ENCODE measurements at regions of chr2 and their contacts with region 1.

Region 1: GRCh38 chr2:224650815-224651439 is 65.2 kb downstream of the CCDC195 start:
- DNase-seq: peak; percentile 57
- ATAC-seq: peak; percentile 90
- H3K4me3 ChIP-seq: no peak overlapping the region
- H3K27ac ChIP-seq: no peak overlapping the region
- H3K4me1 ChIP-seq: no peaks in the 10 kb centered on the region
- H3K27me3 ChIP-seq: no peaks in the 10 kb centered on the region
- CTCF ChIP-seq: peak; percentile 82
- EP300 ChIP-seq: no peak
- POLR2A ChIP-seq: no peak
- RAD21 ChIP-seq: peak; percentile 66

Region 2: GRCh38 chr2:224357098-224357901 is 293.6 kb before region 1 on chr2:
- CTCF ChIA-PET with region 1: interaction called, 41 read pairs
- POLR2A ChIA-PET with region 1: no interaction called
- in situ Hi-C with region 1: loop called (anchors 5 kb)
- intact Hi-C with region 1: loop called (anchors 1 kb)
- DNase-seq: peak; percentile 58
- ATAC-seq: peak; percentile 86
- H3K4me3 ChIP-seq: no peak overlapping the region
- H3K27ac ChIP-seq: no peak overlapping the region
- H3K4me1 ChIP-seq: no peaks in the 10 kb centered on the region
- H3K27me3 ChIP-seq: peaks cover 0 to 10% of the 10 kb centered on the region in 2 experiments; a peak in 2 of 5 replicates
- CTCF ChIP-seq: peak; percentile 90
- EP300 ChIP-seq: no peak
- POLR2A ChIP-seq: no peak
- RAD21 ChIP-seq: peak; percentile 65

Region 3: GRCh38 chr2:224449212-224450147 is 201.4 kb before region 1 on chr2:
- CTCF ChIA-PET with region 1: no interaction called
- POLR2A ChIA-PET with region 1: no interaction called
- in situ Hi-C with region 1: no loop called
- intact Hi-C with region 1: loop called (anchors 1 kb)
- DNase-seq: peak; percentile 44
- ATAC-seq: peak; percentile 83
- H3K4me3 ChIP-seq: no peak overlapping the region
- H3K27ac ChIP-seq: no peak overlapping the region
- H3K4me1 ChIP-seq: no peaks in the 10 kb centered on the region
- H3K27me3 ChIP-seq: no peaks in the 10 kb centered on the region
- CTCF ChIP-seq: peak; percentile 59
- EP300 ChIP-seq: no peak
- POLR2A ChIP-seq: no peak
- RAD21 ChIP-seq: peak; percentile 39; the same call in 1 of the 2 replicates

Region 4: GRCh38 chr2:224479826-224480225 is 171.1 kb before region 1 on chr2:
- CTCF ChIA-PET with region 1: no interaction called
- POLR2A ChIA-PET with region 1: no interaction called
- in situ Hi-C with region 1: no loop called
- intact Hi-C with region 1: loop called (anchors 10 kb)
- DNase-seq: no peak
- ATAC-seq: no peak
- H3K4me3 ChIP-seq: no peak overlapping the region
- H3K27ac ChIP-seq: no peak overlapping the region
- H3K4me1 ChIP-seq: peaks cover 2% of the 10 kb centered on the region
- H3K27me3 ChIP-seq: no peaks in the 10 kb centered on the region
- CTCF ChIP-seq: no peak
- EP300 ChIP-seq: no peak
- POLR2A ChIP-seq: no peak
- RAD21 ChIP-seq: no peak

Region 5: GRCh38 chr2:224591220-224591619 is 59.7 kb before region 1 on chr2:
- CTCF ChIA-PET with region 1: no interaction called
- POLR2A ChIA-PET with region 1: no interaction called
- in situ Hi-C with region 1: no loop called
- intact Hi-C with region 1: loop called (anchors 2 kb)
- DNase-seq: no peak
- ATAC-seq: peak; percentile 66
- H3K4me3 ChIP-seq: no peak overlapping the region
- H3K27ac ChIP-seq: no peak overlapping the region
- H3K4me1 ChIP-seq: peaks cover 5% of the 10 kb centered on the region
- H3K27me3 ChIP-seq: peaks cover 0 to 5% of the 10 kb centered on the region in 2 experiments; a peak in 2 of 5 replicates
- CTCF ChIP-seq: no peak
- EP300 ChIP-seq: no peak
- POLR2A ChIP-seq: no peak
- RAD21 ChIP-seq: no peak

Measured in HepG2 (cell line).